ENCODE measurements at regions of chr14 and their contacts with region 1.

Region 1: GRCh38 chr14:87944987-87945604 is 47.9 kb downstream of the GALC start:
- DNase-seq: peak; percentile 24
- H3K4me3 ChIP-seq: no peak overlapping the region
- CTCF ChIP-seq: peak; percentile 23

Region 2: GRCh38 chr14:87934185-87934584 is 10.9 kb before region 1 on chr14:
- CTCF ChIA-PET with region 1: interaction called, 18 read pairs
- POLR2A ChIA-PET with region 1: no interaction called
- DNase-seq: no peak
- H3K4me3 ChIP-seq: no peak overlapping the region
- CTCF ChIP-seq: no peak

Region 3: GRCh38 chr14:87955501-87955900 is 10.4 kb after region 1 on chr14:
- CTCF ChIA-PET with region 1: interaction called, 18 read pairs
- POLR2A ChIA-PET with region 1: no interaction called
- DNase-seq: no peak
- H3K4me3 ChIP-seq: no peak overlapping the region
- CTCF ChIP-seq: no peak

Region 4: GRCh38 chr14:88013750-88014349 is 68.8 kb after region 1 on chr14:
- CTCF ChIA-PET with region 1: interaction called, 15 read pairs
- POLR2A ChIA-PET with region 1: no interaction called
- DNase-seq: peak; percentile 12
- H3K4me3 ChIP-seq: no peak overlapping the region
- CTCF ChIP-seq: peak; percentile 75

Region 5: GRCh38 chr14:88168498-88169165 is 223.5 kb after region 1 on chr14:
- CTCF ChIA-PET with region 1: interaction called, 28 read pairs
- POLR2A ChIA-PET with region 1: no interaction called
- DNase-seq: no peak
- H3K4me3 ChIP-seq: no peak overlapping the region
- CTCF ChIP-seq: peak; percentile 63

Region 6: DNA sequence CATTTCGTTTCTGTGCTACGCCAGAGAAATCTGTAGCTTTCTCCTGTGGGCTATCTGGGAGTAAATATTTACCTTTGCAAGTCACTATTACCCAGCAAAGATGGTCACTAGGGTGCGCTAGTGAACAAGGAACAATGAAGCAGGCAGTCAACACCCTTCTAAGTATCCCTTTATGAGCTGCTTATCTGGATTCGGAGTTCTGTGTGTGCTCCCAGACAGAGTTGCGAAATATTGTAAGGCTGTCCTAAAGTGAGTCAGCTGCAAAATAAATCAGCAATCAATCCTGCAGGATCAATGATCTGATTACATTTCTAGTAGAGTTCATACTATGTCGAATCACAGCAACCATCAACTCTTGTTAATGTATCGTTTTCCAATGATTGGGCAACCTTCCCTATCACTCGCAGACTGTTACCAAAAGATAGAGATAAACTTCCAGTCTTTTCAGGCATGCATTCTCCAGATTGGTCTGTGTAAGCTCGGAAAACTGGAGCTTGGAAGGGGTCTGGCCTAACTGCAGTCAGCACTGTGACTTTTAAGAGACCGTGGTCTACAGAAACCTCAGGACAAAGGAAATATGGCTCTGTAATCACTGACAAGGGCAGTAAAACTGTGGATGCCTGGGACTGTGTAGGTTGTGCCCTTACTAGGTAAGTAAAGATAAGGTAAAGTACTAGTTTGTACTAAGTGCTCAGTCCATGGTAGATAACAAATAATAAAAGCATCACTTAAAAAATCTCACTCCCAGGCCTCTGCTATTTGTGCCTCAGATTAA is 244.5 kb after region 1 on chr14:
- CTCF ChIA-PET with region 1: interaction called, 11 read pairs
- POLR2A ChIA-PET with region 1: no interaction called
- DNase-seq: peak; percentile 64
- H3K4me3 ChIP-seq: no peak overlapping the region
- CTCF ChIP-seq: peak; percentile 48

Region 7: DNA sequence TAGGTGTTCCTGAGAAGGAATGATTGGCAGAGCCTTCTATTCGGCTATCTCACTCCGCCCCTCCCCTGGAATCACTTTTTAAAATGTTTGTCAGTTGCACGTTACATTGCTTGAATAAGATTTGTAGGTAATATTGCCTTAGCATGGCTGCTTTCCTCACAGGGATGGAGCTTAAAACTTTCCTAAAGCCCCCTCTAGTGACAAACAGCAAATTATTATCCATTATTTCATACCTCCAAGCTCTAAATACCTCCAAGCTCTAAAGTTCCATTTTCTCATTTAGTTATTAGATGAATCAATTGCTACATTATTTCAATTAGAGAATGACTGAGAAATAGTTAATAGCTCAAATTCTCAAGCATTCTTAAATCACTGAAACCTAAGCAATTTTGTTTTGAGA is 435.3 kb after region 1 on chr14:
- CTCF ChIA-PET with region 1: interaction called, 22 read pairs
- POLR2A ChIA-PET with region 1: no interaction called
- DNase-seq: no peak
- H3K4me3 ChIP-seq: no peak overlapping the region
- CTCF ChIP-seq: no peak

Measured in AG04449 (cell line).